WTC11 (cell line): ENCODE measurements at regions of chr22 and their contacts with region 1.

Region 1: GRCh38 chr22:32796865-32797573 is 4.5 kb upstream of the TIMP3 start:
- DNase-seq: peak; percentile 71
- ATAC-seq: peak; percentile 61
- H3K4me3 Mint-ChIP-seq: no peak overlapping the region
- H3K27ac Mint-ChIP-seq: no peak overlapping the region
- H3K4me1 Mint-ChIP-seq: peaks cover 7% of the 10 kb centered on the region
- H3K27me3 Mint-ChIP-seq: peaks cover 33% of the 10 kb centered on the region
- CTCF ChIP-seq: peak; percentile 96

Region 2: GRCh38 chr22:32622004-32622743 is 174.8 kb before region 1 on chr22:
- CTCF ChIA-PET with region 1: interaction called, 27 read pairs
- POLR2A ChIA-PET with region 1: interaction called, 4 read pairs
- DNase-seq: peak; percentile 64
- ATAC-seq: peak; percentile 96
- H3K4me3 Mint-ChIP-seq: peak overlapping the region; percentile 7; the same call in 1 of the 2 replicates
- H3K27ac Mint-ChIP-seq: peak overlapping the region; percentile 91
- H3K4me1 Mint-ChIP-seq: peaks cover 22% of the 10 kb centered on the region
- H3K27me3 Mint-ChIP-seq: peaks cover 5% of the 10 kb centered on the region
- CTCF ChIP-seq: no peak

Region 3: DNA sequence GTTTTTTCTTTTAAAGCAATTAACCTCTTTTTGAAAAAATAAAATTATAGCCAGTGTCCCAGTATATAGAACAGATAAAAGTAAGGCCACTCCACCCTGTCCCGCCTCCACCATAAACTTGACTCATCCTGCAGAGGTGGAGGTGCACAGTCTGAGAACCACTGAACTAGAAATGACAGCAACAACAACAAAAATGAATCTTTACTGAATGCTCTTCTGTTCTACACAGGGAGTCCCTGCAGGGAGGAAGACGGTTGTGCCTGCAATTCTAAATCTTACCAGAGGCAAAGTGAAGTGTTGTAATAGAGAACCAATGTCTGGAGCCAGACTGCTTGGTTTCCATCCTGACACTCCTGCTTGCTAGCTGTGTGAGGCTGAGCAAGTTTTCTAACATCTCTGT is 160.1 kb before region 1 on chr22:
- CTCF ChIA-PET with region 1: no interaction called
- POLR2A ChIA-PET with region 1: no interaction called
- DNase-seq: no peak
- ATAC-seq: no peak
- H3K4me3 Mint-ChIP-seq: no peak overlapping the region
- H3K27ac Mint-ChIP-seq: no peak overlapping the region
- H3K4me1 Mint-ChIP-seq: no peaks in the 10 kb centered on the region
- H3K27me3 Mint-ChIP-seq: no peaks in the 10 kb centered on the region
- CTCF ChIP-seq: no peak

Region 4: GRCh38 chr22:32660292-32660691 is 136.7 kb before region 1 on chr22:
- CTCF ChIA-PET with region 1: interaction called, 70 read pairs
- POLR2A ChIA-PET with region 1: no interaction called
- DNase-seq: peak; percentile 78
- ATAC-seq: peak; percentile 81
- H3K4me3 Mint-ChIP-seq: no peak overlapping the region
- H3K27ac Mint-ChIP-seq: no peak overlapping the region
- H3K4me1 Mint-ChIP-seq: 0 out of 2 replicates have a peak, but pooled peaks cover 2% of the 10 kb centered on the region
- H3K27me3 Mint-ChIP-seq: peaks cover 12% of the 10 kb centered on the region
- CTCF ChIP-seq: peak; percentile 50

Region 5: DNA sequence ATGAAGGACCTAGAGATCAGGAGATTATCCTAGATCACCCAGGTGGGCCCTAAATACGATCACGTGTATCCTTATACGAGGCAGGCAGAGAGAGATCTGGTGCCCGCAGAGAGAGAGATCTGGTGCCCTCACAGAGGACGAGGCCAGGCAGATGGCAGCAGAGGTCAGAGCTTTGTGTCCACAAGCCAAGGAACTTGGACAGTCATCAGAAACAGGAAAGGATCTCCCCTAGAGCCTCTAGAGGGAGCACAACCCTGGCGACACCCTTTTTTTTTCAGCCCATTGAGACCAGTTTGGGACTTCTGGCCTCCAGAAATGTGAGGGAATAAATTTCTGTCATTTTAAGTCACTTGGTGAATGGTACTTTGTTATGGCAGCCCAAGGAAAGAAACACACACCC is 21.1 kb before region 1 on chr22:
- CTCF ChIA-PET with region 1: interaction called, 32 read pairs
- POLR2A ChIA-PET with region 1: no interaction called
- DNase-seq: no peak
- ATAC-seq: peak; percentile 77
- H3K4me3 Mint-ChIP-seq: no peak overlapping the region
- H3K27ac Mint-ChIP-seq: no peak overlapping the region
- H3K4me1 Mint-ChIP-seq: peaks cover 13% of the 10 kb centered on the region
- H3K27me3 Mint-ChIP-seq: peaks cover 5% of the 10 kb centered on the region; the same call in 1 of the 2 replicates
- CTCF ChIP-seq: no peak

Region 6: DNA sequence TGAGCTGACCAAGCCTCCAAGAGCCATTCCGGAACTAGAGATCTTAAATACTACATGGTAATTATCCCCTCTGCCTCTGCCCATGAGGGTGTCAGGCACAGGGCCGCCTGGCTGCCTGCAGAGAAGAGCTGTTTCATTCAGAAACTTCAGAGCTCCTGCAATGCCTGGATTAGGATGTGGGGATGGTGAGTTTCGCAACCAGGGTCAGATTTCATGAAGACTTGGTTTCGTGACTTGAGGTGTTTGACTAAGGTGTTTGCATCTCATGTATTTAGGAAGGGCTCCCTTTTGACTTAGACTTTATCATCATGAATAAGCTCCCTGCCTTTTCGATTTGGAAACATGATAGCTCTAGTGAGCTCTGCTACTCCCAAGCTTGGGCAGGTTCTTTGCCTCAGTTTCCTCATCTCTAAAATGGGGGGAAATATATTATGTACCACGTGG is 13.6 kb after region 1 on chr22:
- CTCF ChIA-PET with region 1: interaction called, 53 read pairs
- POLR2A ChIA-PET with region 1: interaction called, 4 read pairs
- DNase-seq: peak; percentile 38
- ATAC-seq: peak; percentile 87
- H3K4me3 Mint-ChIP-seq: no peak overlapping the region
- H3K27ac Mint-ChIP-seq: no peak overlapping the region
- H3K4me1 Mint-ChIP-seq: peaks cover 35% of the 10 kb centered on the region
- H3K27me3 Mint-ChIP-seq: no peaks in the 10 kb centered on the region
- CTCF ChIP-seq: no peak

Region 7: DNA sequence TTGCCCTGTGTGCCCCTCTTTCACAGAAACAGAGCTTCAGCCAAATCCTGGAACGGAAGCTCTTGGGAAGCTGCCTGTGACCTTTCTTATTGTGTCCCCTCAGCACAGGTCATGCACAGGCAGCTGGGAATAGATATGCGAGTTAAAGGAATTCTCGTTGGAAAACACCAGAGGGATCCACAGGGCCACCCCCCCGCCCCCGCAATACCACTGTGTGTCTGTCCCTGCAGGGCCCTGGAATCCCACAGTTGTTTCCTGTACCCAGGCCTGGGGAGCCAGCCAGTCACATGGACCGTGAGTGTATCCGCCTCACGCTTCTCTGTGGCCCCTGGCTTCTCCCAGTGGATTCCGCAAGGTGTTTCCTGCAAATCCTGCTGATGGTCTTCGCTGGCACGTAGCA is 33.5 kb after region 1 on chr22:
- CTCF ChIA-PET with region 1: interaction called, 15 read pairs
- POLR2A ChIA-PET with region 1: no interaction called
- DNase-seq: peak; percentile 28
- ATAC-seq: peak; percentile 63
- H3K4me3 Mint-ChIP-seq: no peak overlapping the region
- H3K27ac Mint-ChIP-seq: peak overlapping the region; percentile 65; the same call in 1 of the 2 replicates
- H3K4me1 Mint-ChIP-seq: peaks cover 19% of the 10 kb centered on the region
- H3K27me3 Mint-ChIP-seq: no peaks in the 10 kb centered on the region; the same call in 1 of the 2 replicates
- CTCF ChIP-seq: no peak

Region 8: GRCh38 chr22:33000342-33001280 is 203.6 kb after region 1 on chr22:
- CTCF ChIA-PET with region 1: interaction called, 12 read pairs
- POLR2A ChIA-PET with region 1: no interaction called
- DNase-seq: peak; percentile 89
- ATAC-seq: peak; percentile 98
- H3K4me3 Mint-ChIP-seq: no peak overlapping the region
- H3K27ac Mint-ChIP-seq: peak overlapping the region; percentile 58; the same call in 1 of the 2 replicates
- H3K4me1 Mint-ChIP-seq: peaks cover 28% of the 10 kb centered on the region
- H3K27me3 Mint-ChIP-seq: no peaks in the 10 kb centered on the region
- CTCF ChIP-seq: peak; percentile 71; the same call in 1 of the 2 replicates

Region 9: GRCh38 chr22:33163815-33164214 is 366.8 kb after region 1 on chr22:
- CTCF ChIA-PET with region 1: no interaction called
- POLR2A ChIA-PET with region 1: no interaction called
- DNase-seq: no peak
- ATAC-seq: no peak
- H3K4me3 Mint-ChIP-seq: no peak overlapping the region
- H3K27ac Mint-ChIP-seq: no peak overlapping the region
- H3K4me1 Mint-ChIP-seq: no peaks in the 10 kb centered on the region
- H3K27me3 Mint-ChIP-seq: peaks cover 25% of the 10 kb centered on the region
- CTCF ChIP-seq: no peak